ENCODE measurements at regions of chr13 and their contacts with region 1.

Region 1: DNA sequence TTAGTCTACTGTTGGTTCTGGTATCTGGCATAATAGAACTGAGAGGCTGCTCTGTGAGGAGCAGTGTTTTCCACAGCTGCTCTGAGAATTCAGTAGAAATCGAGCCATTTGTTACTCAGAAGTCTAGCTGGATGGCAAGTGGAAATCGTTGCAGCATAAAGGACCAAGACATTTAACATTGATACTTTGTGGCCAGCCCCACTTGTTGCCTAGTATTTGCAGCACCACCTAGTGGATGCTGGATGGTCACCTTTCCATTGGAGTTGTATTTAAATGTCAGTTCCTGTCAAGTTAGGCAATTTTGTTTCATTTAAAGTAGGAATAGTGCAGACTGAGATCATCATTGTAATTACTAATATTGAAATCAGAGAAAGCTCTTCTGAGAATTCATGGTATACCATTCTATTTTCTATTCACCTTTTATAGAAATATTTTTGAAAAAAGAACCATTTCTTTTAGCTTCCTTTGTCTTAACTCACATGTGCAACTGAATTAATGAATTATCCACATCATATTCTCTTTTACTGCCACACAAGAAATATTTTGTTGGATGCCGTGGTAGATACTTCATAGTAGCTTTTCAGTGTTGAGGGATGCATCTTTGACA is 64.6 kb downstream of the PDS5B start:
- DNase-seq: peak; percentile 71
- ATAC-seq: peak; percentile 74
- H3K4me3 ChIP-seq: no peak overlapping the region
- H3K4me3 Mint-ChIP-seq: no peak overlapping the region
- H3K27ac ChIP-seq: no peak overlapping the region
- H3K27ac Mint-ChIP-seq: no peak overlapping the region
- H3K4me1 ChIP-seq: peaks cover 26 to 38% of the 10 kb centered on the region in 2 donors
- H3K4me1 Mint-ChIP-seq: peaks cover 53% of the 10 kb centered on the region
- H3K27me3 ChIP-seq: no peaks in the 10 kb centered on the region
- H3K27me3 Mint-ChIP-seq: no peaks in the 10 kb centered on the region
- CTCF ChIP-seq: peak; percentile 89

Region 2: GRCh38 chr13:32639502-32640105 is 11.2 kb before region 1 on chr13:
- CTCF ChIA-PET with region 1: interaction called, 32 read pairs
- POLR2A ChIA-PET with region 1: no interaction called
- intact Hi-C with region 1: loop called (anchors 1 kb)
- DNase-seq: peak; percentile 72
- ATAC-seq: peak; percentile 80
- H3K4me3 ChIP-seq: no peak overlapping the region
- H3K4me3 Mint-ChIP-seq: no peak overlapping the region
- H3K27ac ChIP-seq: no peak overlapping the region
- H3K27ac Mint-ChIP-seq: no peak overlapping the region
- H3K4me1 ChIP-seq: peaks cover 0 to 11% of the 10 kb centered on the region in 2 donors
- H3K4me1 Mint-ChIP-seq: peaks cover 33% of the 10 kb centered on the region
- H3K27me3 ChIP-seq: no peaks in the 10 kb centered on the region
- H3K27me3 Mint-ChIP-seq: no peaks in the 10 kb centered on the region
- CTCF ChIP-seq: peak; percentile 93

Region 3: DNA sequence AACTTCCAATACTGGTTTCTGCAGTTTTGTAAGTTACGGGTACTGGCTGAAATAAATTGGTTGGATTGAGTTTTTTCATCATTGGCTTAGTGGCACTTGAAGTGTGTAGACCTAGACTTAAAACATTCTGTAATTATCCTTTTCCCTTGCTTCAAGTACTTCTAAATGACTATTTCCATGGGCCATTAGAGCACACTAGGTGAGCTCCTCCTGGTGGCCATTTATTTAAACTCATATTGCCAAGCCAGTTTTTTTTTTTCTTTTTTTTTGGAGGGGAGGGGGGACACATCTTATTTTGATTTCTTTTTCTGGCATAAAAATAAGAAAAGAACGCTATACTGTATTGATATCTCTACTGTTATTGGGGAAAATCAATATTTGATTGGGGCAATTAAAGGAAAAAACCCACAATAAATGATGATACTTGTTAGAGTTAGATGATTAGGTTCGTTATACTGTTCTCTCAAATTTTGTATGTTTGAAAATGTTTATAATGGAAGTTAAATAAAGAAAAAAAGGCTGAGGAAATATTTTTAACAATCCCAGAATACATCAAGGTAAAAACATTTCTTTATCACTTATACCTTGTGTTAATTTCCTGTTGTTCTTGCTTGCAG is 18.3 kb after region 1 on chr13:
- CTCF ChIA-PET with region 1: interaction called, 33 read pairs
- POLR2A ChIA-PET with region 1: no interaction called
- intact Hi-C with region 1: no loop called
- DNase-seq: peak; percentile 63
- ATAC-seq: peak; percentile 41
- H3K4me3 ChIP-seq: no peak overlapping the region
- H3K4me3 Mint-ChIP-seq: no peak overlapping the region
- H3K27ac ChIP-seq: no peak overlapping the region
- H3K27ac Mint-ChIP-seq: no peak overlapping the region
- H3K4me1 ChIP-seq: no peaks in the 10 kb centered on the region
- H3K4me1 Mint-ChIP-seq: no peaks in the 10 kb centered on the region
- H3K27me3 ChIP-seq: no peaks in the 10 kb centered on the region
- H3K27me3 Mint-ChIP-seq: no peaks in the 10 kb centered on the region
- CTCF ChIP-seq: peak; percentile 83

Measured in B cell (primary cell).